K562 (cell line): ENCODE measurements at regions of chr6 and their contacts with region 1.

Region 1: GRCh38 chr6:124870611-124871459 is 91.4 kb upstream of the RNF217 start:
- DNase-seq: peak in 2 of 4 experiments; percentile 21 to 50
- ATAC-seq: peak; percentile 55; the same call in 1 of the 3 replicates
- H3K4me3 ChIP-seq: no peak overlapping the region
- H3K27ac ChIP-seq: no peak overlapping the region
- H3K4me1 ChIP-seq: no peaks in the 10 kb centered on the region; a peak in 1 of 5 replicates
- H3K27me3 ChIP-seq: no peaks in the 10 kb centered on the region
- CTCF ChIP-seq: peak; percentile 40 to 85 (median 55); a peak in 4 of 6 replicates
- EP300 ChIP-seq: no peak
- POLR2A ChIP-seq: no peak
- RAD21 ChIP-seq: peak; percentile 95 to 96

Region 2: DNA sequence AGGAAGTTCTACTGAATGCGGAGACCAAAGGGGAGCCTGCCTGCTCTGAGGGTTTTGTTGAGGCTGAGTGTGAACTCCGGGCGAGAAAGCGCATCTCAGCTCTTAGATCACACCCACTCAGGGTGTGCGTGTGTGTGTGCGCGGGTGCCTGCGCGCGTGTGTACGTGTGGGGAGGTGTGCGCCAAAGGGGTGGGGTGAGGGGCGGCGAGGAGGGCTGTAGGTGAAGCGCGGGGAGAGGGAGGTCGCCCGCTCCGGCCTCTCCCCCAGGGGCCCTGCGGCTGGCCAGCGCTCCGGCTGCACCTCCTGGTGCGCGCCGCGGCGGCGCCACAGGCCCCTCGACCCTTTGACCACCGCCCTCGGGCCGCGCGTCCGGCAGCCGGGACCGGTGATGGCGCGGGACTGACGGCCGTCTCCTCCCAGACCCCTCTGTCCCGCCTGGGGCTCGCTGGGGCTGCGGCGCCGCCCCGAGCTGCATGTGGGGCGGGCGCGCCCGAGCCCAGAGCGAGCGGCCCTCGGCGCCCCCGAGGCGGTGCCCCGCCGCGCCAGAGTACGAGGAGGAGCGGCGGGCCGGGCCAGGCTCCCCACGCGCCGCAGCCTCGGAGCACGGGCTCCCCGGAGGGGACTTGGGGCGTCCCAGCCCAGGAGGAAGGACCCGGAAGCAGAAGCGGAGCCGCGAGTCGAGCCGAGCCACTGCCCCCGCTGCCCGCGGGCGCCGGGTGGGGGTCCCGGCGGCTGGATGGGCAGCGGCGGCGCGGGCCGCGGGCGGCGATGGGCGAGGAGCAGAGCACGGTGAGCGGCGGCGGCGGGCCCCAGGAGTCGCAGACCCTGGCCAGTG is 91.2 kb after region 1 on chr6 and contains the start of gene RNF217:
- CTCF ChIA-PET with region 1: no interaction called
- POLR2A ChIA-PET with region 1: no interaction called
- in situ Hi-C with region 1: no loop called
- intact Hi-C with region 1: loop called (anchors 2 kb)
- DNase-seq: peak; percentile 82 to 86 (median 84)
- ATAC-seq: peak; percentile 74
- H3K4me3 ChIP-seq: peak within 1 kb of the TSS; percentile 75
- H3K27ac ChIP-seq: peak within 1 kb of the TSS; percentile 84
- H3K4me1 ChIP-seq: peaks cover 16 to 23% of the 10 kb centered on the region in 2 experiments
- H3K27me3 ChIP-seq: no peaks in the 10 kb centered on the region
- CTCF ChIP-seq: peak in 2 of 3 experiments; percentile 19 to 41; a peak in 3 of 6 replicates
- EP300 ChIP-seq: no peak
- POLR2A ChIP-seq: peak; percentile 68
- RAD21 ChIP-seq: no peak
- polyA plus RNA-seq, gene RNF217: 2.9 to 4.0 TPM

Region 3: DNA sequence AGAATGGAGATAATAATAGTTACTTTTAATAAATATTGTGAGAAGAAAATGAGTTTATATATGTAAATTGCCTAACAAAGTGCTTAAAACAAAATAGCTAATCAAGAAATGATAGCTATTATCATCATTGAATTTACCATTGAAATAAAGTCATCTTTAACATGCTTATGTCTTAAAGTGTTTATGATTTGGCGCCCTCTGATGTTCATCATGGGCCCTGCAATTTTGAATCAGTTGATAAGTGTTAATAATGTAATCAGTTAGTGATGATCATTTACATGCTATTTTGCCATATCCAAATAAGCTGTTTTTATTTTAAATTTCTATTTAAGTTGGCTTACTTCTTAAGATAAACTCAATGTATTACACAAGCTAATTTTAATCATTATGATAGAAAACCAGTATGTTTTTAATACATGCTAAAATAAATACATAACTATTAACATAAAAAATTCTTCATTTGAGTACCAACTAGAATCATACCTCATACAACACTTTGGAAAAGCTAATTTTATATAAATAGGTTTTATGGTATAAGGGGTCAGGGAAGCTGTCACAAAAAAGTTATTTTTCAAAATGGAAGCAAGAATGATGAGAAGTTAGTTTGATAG is 243.5 kb after region 1 on chr6:
- CTCF ChIA-PET with region 1: interaction called, 16 read pairs
- POLR2A ChIA-PET with region 1: no interaction called
- in situ Hi-C with region 1: loop called (anchors 5 kb)
- intact Hi-C with region 1: loop called (anchors 1 kb)
- DNase-seq: peak in 3 of 4 experiments; percentile 45 to 78 (median 45)
- ATAC-seq: peak; percentile 71; the same call in 2 of the 3 replicates
- H3K4me3 ChIP-seq: no peak overlapping the region
- H3K27ac ChIP-seq: no peak overlapping the region
- H3K4me1 ChIP-seq: no peaks in the 10 kb centered on the region
- H3K27me3 ChIP-seq: no peaks in the 10 kb centered on the region
- CTCF ChIP-seq: peak; percentile 38 to 81 (median 51); a peak in 4 of 6 replicates
- EP300 ChIP-seq: no peak
- POLR2A ChIP-seq: no peak
- RAD21 ChIP-seq: peak; percentile 79 to 95

Region 4: DNA sequence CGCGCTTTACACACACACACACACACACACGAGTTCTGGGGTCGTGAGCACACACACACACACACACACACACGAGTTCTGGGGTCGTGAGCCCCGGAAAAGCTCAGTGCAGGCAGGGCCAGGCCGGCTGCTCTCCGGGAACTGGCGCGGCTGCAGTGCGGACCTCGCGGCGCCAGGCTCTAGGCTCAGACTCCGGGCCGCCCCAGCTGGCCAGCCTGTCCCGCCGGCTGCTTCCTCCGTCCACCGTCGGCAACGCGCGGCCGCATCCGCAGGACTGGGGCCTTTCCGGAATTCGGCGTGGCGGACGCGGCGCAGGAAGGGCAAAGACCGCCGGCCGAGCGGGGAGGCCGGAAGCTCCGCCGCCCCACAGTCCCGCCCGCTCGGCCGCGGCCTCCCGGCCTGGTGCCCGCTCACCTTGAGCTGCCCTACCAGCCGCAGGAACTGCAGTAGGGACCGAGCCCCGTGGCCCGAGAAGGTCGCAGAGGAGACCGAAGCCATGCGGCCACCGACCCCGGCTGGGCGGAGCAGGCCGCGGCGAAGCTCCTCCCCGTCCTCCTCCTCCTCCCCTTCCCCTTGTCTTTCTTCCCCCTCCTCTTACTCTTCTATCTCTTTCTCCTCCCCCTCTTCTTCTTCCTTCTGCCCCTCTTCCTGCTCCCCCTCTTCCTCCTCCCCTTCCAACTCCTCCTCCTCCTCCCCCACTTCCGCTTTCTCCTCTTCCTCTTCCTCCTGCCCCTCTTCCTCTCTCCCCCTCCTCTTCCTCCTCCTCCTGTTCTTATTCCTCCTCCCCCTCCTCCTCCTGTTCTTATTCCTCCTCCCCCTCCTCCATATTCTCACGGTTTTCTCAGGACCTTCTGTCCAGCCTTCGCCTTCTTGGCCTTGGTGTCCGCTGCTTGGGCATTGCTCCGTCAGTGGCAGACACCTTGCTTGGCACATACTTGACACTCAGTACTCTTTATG is 430.9 kb after region 1 on chr6 and contains the start of gene HDDC2:
- CTCF ChIA-PET with region 1: no interaction called
- POLR2A ChIA-PET with region 1: no interaction called
- in situ Hi-C with region 1: loop called (anchors 10 kb)
- intact Hi-C with region 1: no loop called
- DNase-seq: peak; percentile 83 to 89 (median 89)
- ATAC-seq: peak; percentile 84
- H3K4me3 ChIP-seq: peak within 1 kb of the TSS; percentile 80
- H3K27ac ChIP-seq: peak within 1 kb of the TSS; percentile 96
- H3K4me1 ChIP-seq: peaks cover 11 to 51% of the 10 kb centered on the region in 2 experiments
- H3K27me3 ChIP-seq: no peaks in the 10 kb centered on the region
- CTCF ChIP-seq: no peak
- EP300 ChIP-seq: no peak
- POLR2A ChIP-seq: peak; percentile 93
- RAD21 ChIP-seq: no peak
- polyA plus RNA-seq, gene HDDC2: 587 to 632 TPM

Region 5: GRCh38 chr6:125393449-125393858 is 522.6 kb after region 1 on chr6:
- CTCF ChIA-PET with region 1: no interaction called
- POLR2A ChIA-PET with region 1: no interaction called
- in situ Hi-C with region 1: no loop called
- intact Hi-C with region 1: no loop called
- DNase-seq: no peak
- ATAC-seq: no peak
- H3K4me3 ChIP-seq: no peak overlapping the region
- H3K27ac ChIP-seq: no peak overlapping the region
- H3K4me1 ChIP-seq: no peaks in the 10 kb centered on the region
- H3K27me3 ChIP-seq: no peaks in the 10 kb centered on the region
- CTCF ChIP-seq: no peak
- EP300 ChIP-seq: no peak
- POLR2A ChIP-seq: no peak
- RAD21 ChIP-seq: no peak

Region 6: DNA sequence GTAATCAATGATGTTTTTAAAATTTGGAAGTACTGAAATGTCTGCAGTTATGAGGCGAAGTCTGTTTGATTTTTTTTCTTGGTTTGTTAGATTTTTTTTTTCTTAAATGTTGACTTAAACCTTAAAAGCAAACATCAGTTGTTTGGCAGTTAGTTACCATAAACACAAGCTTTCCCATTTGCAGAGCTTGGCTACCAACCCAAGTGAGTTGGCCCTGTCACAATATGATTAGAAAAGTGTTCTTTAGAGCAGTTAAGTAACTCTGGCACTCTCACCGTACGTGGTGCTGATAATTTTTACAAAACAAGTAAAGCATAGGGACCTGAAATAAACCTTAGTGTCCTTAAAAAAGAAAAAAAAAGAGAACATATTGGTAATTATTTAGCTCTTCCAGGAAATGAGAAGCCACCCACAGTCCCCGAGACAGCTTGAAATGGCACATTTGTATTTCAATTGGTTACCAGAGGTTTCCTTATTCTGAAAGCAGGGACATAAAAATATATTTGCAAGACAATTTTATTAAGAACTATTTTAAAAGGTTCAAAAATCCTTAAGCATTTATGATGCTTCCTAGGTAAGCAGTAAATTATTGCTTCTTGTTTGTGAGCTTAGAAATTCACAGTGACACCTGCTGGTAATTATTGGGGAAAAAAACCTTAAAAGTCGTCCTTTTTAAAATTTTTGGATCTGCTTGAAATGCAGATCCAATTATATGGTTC is 882.5 kb after region 1 on chr6:
- CTCF ChIA-PET with region 1: interaction called, 5 read pairs
- POLR2A ChIA-PET with region 1: no interaction called
- in situ Hi-C with region 1: loop called (anchors 10 kb)
- intact Hi-C with region 1: loop called (anchors 2 kb)
- DNase-seq: peak in 1 of 4 experiments; percentile 36
- ATAC-seq: no peak
- H3K4me3 ChIP-seq: no peak overlapping the region
- H3K27ac ChIP-seq: no peak overlapping the region
- H3K4me1 ChIP-seq: peaks cover 9 to 17% of the 10 kb centered on the region in 2 experiments; a peak in 4 of 5 replicates
- H3K27me3 ChIP-seq: peaks cover 16 to 27% of the 10 kb centered on the region in 2 experiments
- CTCF ChIP-seq: peak in 1 of 3 experiments; percentile 61; a peak in 2 of 6 replicates
- EP300 ChIP-seq: no peak
- POLR2A ChIP-seq: no peak
- RAD21 ChIP-seq: peak; percentile 58 to 69

Region 7: GRCh38 chr6:125759184-125759902 is 888.5 kb after region 1 on chr6:
- CTCF ChIA-PET with region 1: interaction called, 5 read pairs
- POLR2A ChIA-PET with region 1: no interaction called
- in situ Hi-C with region 1: loop called (anchors 10 kb)
- intact Hi-C with region 1: loop called (anchors 2 kb)
- DNase-seq: peak; percentile 77 to 84 (median 80)
- ATAC-seq: peak; percentile 98
- H3K4me3 ChIP-seq: no peak overlapping the region; the same call in 1 of the 2 replicates
- H3K27ac ChIP-seq: no peak overlapping the region
- H3K4me1 ChIP-seq: peaks cover 3 to 8% of the 10 kb centered on the region in 2 experiments; a peak in 3 of 5 replicates
- H3K27me3 ChIP-seq: peaks cover 7 to 14% of the 10 kb centered on the region in 2 experiments
- CTCF ChIP-seq: peak; percentile 78 to 88 (median 84)
- EP300 ChIP-seq: no peak
- POLR2A ChIP-seq: no peak
- RAD21 ChIP-seq: peak; percentile 48 to 77

Region 8: GRCh38 chr6:125844989-125845388 is 974.2 kb after region 1 on chr6:
- CTCF ChIA-PET with region 1: no interaction called
- POLR2A ChIA-PET with region 1: no interaction called
- in situ Hi-C with region 1: loop called (anchors 10 kb)
- intact Hi-C with region 1: no loop called
- DNase-seq: no peak
- ATAC-seq: peak; percentile 71
- H3K4me3 ChIP-seq: no peak overlapping the region
- H3K27ac ChIP-seq: no peak overlapping the region
- H3K4me1 ChIP-seq: peaks cover 9 to 30% of the 10 kb centered on the region in 2 experiments; a peak in 4 of 5 replicates
- H3K27me3 ChIP-seq: no peaks in the 10 kb centered on the region
- CTCF ChIP-seq: no peak
- EP300 ChIP-seq: no peak
- POLR2A ChIP-seq: no peak
- RAD21 ChIP-seq: no peak